ENCODE measurements at regions of chrX and their contacts with region 1.

Region 1: GRCh38 chrX:15854712-15855567 is at the start of gene AP1S2:
- DNase-seq: peak; percentile 93 to 100 (median 99)
- H3K4me3 ChIP-seq: peak within 1 kb of the TSS; percentile 57 to 77
- H3K4me3 Mint-ChIP-seq: peak within 1 kb of the TSS; percentile 91 to 98 (median 96)
- H3K27ac ChIP-seq: peak within 1 kb of the TSS; percentile 78
- H3K27ac Mint-ChIP-seq: peak within 1 kb of the TSS; percentile 96 to 99 (median 98)
- H3K4me1 ChIP-seq: peaks cover 19% of the 10 kb centered on the region
- H3K4me1 Mint-ChIP-seq: peaks cover 12 to 37% (median 21%) of the 10 kb centered on the region in 4 donors
- H3K27me3 ChIP-seq: no peaks in the 10 kb centered on the region
- H3K27me3 Mint-ChIP-seq: no peaks in the 10 kb centered on the region
- total RNA-seq, gene AP1S2: 23.9 to 26.4 TPM

Region 2: GRCh38 chrX:15335135-15336022 is 519.6 kb before region 1 on chrX and contains the start of gene PIGA:
- CTCF ChIA-PET with region 1: no interaction called
- POLR2A ChIA-PET with region 1: no interaction called
- intact Hi-C with region 1: loop called (anchors 2 kb)
- DNase-seq: peak; percentile 87 to 97 (median 93)
- H3K4me3 ChIP-seq: peak within 1 kb of the TSS; percentile 73 to 84
- H3K4me3 Mint-ChIP-seq: peak within 1 kb of the TSS; percentile 90 to 96 (median 91)
- H3K27ac ChIP-seq: peak within 1 kb of the TSS; percentile 89
- H3K27ac Mint-ChIP-seq: peak within 1 kb of the TSS; percentile 95 to 97 (median 96)
- H3K4me1 ChIP-seq: peaks cover 20% of the 10 kb centered on the region
- H3K4me1 Mint-ChIP-seq: peaks cover 4 to 28% (median 8%) of the 10 kb centered on the region in 4 donors
- H3K27me3 ChIP-seq: peaks cover 5% of the 10 kb centered on the region
- H3K27me3 Mint-ChIP-seq: peaks cover 4 to 6% of the 10 kb centered on the region in 2 donors
- total RNA-seq, gene PIGA: 27.8 to 32.3 TPM

Region 3: GRCh38 chrX:15737960-15738902 is 116.7 kb before region 1 on chrX and contains the start of gene CA5B:
- CTCF ChIA-PET with region 1: interaction called, 3 read pairs
- POLR2A ChIA-PET with region 1: interaction called, 21 read pairs
- intact Hi-C with region 1: loop called (anchors 1 kb)
- DNase-seq: peak; percentile 95 to 100 (median 99)
- H3K4me3 ChIP-seq: peak within 1 kb of the TSS; percentile 57 to 81
- H3K4me3 Mint-ChIP-seq: peak within 1 kb of the TSS; percentile 94 to 99 (median 97)
- H3K27ac ChIP-seq: peak within 1 kb of the TSS; percentile 87
- H3K27ac Mint-ChIP-seq: peak within 1 kb of the TSS; percentile 93 to 99 (median 97)
- H3K4me1 ChIP-seq: peaks cover 40% of the 10 kb centered on the region
- H3K4me1 Mint-ChIP-seq: peaks cover 30 to 57% (median 45%) of the 10 kb centered on the region in 4 donors
- H3K27me3 ChIP-seq: no peaks in the 10 kb centered on the region
- H3K27me3 Mint-ChIP-seq: no peaks in the 10 kb centered on the region
- total RNA-seq, gene CA5B: 45.7 to 54.5 TPM

Region 4: DNA sequence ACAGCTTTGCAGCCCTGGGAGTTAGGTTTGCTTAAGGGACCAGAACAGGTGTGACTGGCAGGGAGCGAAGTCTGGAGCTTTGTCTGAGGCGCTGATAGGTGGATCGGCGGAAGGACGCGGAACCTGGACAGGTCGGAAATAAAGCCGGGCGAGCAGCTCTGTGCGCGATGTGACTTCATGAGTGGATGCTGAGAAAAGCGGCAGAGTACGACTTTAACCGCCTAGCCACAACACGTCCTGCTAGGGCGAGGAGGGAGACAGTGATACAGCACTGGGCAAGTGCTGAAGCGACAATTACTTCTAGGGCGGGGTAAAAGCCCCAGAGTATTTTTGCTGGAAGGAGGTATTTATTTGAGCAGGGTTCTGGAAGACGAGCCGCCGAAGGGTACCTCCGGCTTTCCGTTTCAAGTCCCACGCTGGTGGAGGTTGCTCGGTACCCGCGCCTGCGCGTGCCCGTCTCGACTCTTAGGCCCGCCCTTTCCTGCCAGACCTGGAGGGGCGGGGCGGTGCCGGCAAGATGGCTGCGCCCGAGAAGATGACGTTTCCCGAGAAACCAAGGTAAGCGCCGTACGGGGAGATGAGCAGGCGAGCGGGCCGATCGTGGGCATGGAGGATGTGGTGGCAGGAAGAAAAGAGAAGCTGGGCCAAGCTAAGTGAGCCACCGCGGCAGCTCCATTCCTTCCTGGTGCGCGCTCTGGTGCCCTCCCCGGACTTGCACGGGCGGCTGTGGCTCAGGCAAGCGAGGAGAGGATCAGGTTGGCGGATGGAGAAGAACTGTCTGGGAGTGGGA is 64.8 kb before region 1 on chrX and contains the start of gene ZRSR2:
- CTCF ChIA-PET with region 1: interaction called, 5 read pairs
- POLR2A ChIA-PET with region 1: interaction called, 30 read pairs
- intact Hi-C with region 1: loop called (anchors 1 kb)
- DNase-seq: peak; percentile 91 to 95 (median 94)
- H3K4me3 ChIP-seq: peak within 1 kb of the TSS; percentile 65 to 76
- H3K4me3 Mint-ChIP-seq: peak within 1 kb of the TSS in 1 of 8 donors; percentile 18
- H3K27ac ChIP-seq: peak within 1 kb of the TSS; percentile 83
- H3K27ac Mint-ChIP-seq: peak within 1 kb of the TSS in 1 of 7 donors; percentile 68
- H3K4me1 ChIP-seq: peaks cover 37% of the 10 kb centered on the region
- H3K4me1 Mint-ChIP-seq: peaks cover 13 to 35% (median 24%) of the 10 kb centered on the region in 4 donors
- H3K27me3 ChIP-seq: no peaks in the 10 kb centered on the region
- H3K27me3 Mint-ChIP-seq: no peaks in the 10 kb centered on the region
- total RNA-seq, gene ZRSR2: 30.1 to 30.7 TPM

Region 5: DNA sequence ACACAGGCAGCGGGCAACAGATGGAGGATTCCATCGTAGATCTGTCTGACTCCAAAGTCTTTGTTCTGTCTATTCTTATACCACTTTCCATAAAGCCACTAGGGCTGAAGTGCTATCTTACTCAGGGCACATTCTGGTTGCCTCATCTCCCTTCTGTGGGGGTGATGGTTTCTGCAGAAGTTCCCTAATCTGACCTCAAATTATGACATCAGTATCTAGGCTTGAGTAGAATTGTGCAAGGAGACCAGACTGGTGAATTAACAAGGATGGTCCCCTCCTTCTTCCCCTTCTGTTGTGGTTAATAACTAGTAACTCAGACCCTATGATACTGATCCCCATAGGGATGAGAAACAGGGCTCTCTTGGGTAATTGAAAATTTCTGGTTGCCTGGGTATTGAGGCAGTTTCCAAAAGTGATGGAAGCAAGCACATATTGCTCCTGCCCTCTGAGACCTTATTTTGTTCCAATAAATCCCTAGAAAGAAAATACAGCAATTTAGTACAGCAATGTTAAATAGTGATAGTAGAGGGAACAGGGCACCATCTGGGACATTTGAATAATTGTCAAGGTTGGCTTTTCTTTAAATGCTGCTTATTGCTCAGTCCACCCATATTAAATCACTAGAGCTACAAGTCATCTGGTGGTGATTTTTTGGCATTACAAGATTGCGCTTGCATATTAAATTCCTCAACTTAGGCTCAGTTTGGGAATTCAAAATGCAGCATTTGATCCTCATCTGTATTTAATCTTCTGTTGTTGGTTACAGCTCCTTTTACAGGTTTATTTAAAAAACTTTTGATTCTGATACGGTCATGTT is 57.0 kb after region 1 on chrX:
- CTCF ChIA-PET with region 1: no interaction called
- POLR2A ChIA-PET with region 1: no interaction called
- intact Hi-C with region 1: no loop called
- DNase-seq: no peak
- H3K4me3 ChIP-seq: no peak overlapping the region
- H3K4me3 Mint-ChIP-seq: no peak overlapping the region
- H3K27ac ChIP-seq: no peak overlapping the region
- H3K27ac Mint-ChIP-seq: no peak overlapping the region
- H3K4me1 ChIP-seq: no peaks in the 10 kb centered on the region
- H3K4me1 Mint-ChIP-seq: peaks cover 0 to 2% (median 0%) of the 10 kb centered on the region in 4 donors
- H3K27me3 ChIP-seq: no peaks in the 10 kb centered on the region
- H3K27me3 Mint-ChIP-seq: peaks cover 1 to 2% of the 10 kb centered on the region in 2 donors

Region 6: DNA sequence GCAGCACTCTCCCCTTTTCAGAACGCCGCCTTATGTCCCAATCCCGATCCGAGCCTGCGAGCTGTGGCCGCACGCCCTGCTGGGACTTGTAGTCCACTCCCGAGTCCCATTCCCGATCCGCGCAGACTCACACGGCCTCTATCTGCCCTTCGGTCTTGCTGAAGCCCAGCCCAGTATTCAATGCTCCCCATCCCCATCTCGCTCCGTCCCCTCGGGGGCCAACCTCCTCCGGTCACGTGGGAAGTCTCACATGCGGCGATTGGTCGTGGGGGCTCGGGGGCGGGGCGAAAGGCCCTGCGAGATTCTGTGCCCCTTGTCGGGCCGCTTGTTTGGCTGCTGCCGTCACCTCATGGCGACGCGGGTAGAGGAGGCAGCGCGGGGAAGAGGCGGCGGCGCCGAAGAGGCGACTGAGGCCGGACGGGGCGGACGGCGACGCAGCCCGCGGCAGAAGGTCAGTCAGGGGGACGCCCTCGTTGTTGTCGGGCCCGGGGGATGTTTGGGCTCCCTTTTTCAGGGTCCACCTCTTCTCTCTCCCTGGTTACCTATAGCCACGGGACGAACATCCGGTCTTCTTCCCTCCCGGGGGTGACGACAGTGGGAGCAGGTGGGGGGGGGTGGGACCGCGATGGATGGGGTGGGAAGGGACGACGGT is 931.3 kb after region 1 on chrX and contains the start of gene TXLNG:
- CTCF ChIA-PET with region 1: no interaction called
- POLR2A ChIA-PET with region 1: no interaction called
- intact Hi-C with region 1: loop called (anchors 2 kb)
- DNase-seq: peak; percentile 97 to 99 (median 99)
- H3K4me3 ChIP-seq: peak within 1 kb of the TSS; percentile 63 to 70
- H3K4me3 Mint-ChIP-seq: peak within 1 kb of the TSS; percentile 92 to 96 (median 94)
- H3K27ac ChIP-seq: peak within 1 kb of the TSS; percentile 77
- H3K27ac Mint-ChIP-seq: peak within 1 kb of the TSS; percentile 78 to 96 (median 92)
- H3K4me1 ChIP-seq: peaks cover 12% of the 10 kb centered on the region
- H3K4me1 Mint-ChIP-seq: peaks cover 13 to 36% (median 21%) of the 10 kb centered on the region in 4 donors
- H3K27me3 ChIP-seq: no peaks in the 10 kb centered on the region
- H3K27me3 Mint-ChIP-seq: no peaks in the 10 kb centered on the region
- total RNA-seq, gene TXLNG: 17.8 to 19.8 TPM

Measured in CD4-positive, alpha-beta memory T cell (primary cell).